PC-9 (cell line): ENCODE measurements at regions of chr7 and their contacts with region 1.

Region 1: GRCh38 chr7:24812310-24812945 is 55.2 kb upstream of the GSDME start:
- DNase-seq: peak in 1 of 2 experiments; percentile 61
- H3K4me3 ChIP-seq: no peak overlapping the region
- H3K27ac ChIP-seq: no peak overlapping the region
- H3K4me1 ChIP-seq: no peaks in the 10 kb centered on the region
- H3K27me3 ChIP-seq: no peaks in the 10 kb centered on the region
- CTCF ChIP-seq: peak; percentile 99

Region 2: DNA sequence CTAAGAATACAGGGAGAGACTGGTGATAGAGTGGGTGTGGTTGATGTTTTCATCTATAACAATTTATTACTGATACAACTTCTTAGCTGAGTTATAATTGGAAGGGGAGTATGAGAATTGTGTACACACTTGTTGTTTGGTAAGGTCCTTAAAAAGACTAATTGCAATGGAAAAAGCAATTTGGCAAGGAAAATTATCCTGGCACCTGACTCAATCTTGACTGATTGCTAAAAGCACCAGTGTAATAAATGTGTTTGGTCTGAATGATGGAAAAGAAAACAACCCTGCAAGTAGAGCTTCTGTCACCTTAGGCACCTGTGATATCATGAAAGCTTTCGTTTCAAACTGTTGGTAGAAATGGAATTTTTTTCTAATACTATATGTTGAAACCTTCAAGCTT is 48.4 kb before region 1 on chr7:
- CTCF ChIA-PET with region 1: interaction called, 11 read pairs
- POLR2A ChIA-PET with region 1: no interaction called
- intact Hi-C with region 1: no loop called
- DNase-seq: no peak
- H3K4me3 ChIP-seq: no peak overlapping the region
- H3K27ac ChIP-seq: no peak overlapping the region
- H3K4me1 ChIP-seq: no peaks in the 10 kb centered on the region
- H3K27me3 ChIP-seq: no peaks in the 10 kb centered on the region
- CTCF ChIP-seq: no peak

Region 3: GRCh38 chr7:24825931-24826661 is 13.7 kb after region 1 on chr7:
- CTCF ChIA-PET with region 1: interaction called, 16 read pairs
- POLR2A ChIA-PET with region 1: no interaction called
- intact Hi-C with region 1: no loop called
- DNase-seq: peak; percentile 82 to 98
- H3K4me3 ChIP-seq: peak overlapping the region; percentile 10; the same call in 1 of the 2 replicates
- H3K27ac ChIP-seq: peak overlapping the region; percentile 90
- H3K4me1 ChIP-seq: peaks cover 57% of the 10 kb centered on the region
- H3K27me3 ChIP-seq: no peaks in the 10 kb centered on the region
- CTCF ChIP-seq: no peak

Region 4: DNA sequence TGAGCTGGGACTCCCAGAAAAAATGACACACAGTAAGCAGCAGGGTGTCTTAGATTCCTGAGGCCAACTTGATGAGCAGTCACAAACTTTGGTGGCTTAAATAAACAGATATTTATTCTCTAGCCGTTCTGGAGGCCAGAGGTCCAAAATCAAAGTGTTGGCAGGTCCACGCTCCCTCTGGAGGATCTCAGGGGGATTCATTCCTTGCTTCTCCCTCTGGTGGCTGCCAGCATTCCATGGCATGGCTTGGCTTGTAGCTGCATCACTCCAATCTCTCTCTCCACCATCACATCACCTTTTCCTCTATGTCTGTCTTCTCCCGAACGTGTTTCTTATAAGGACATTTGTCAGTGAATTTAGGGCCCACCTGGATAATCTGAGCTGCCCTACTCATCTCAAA is 69.2 kb after region 1 on chr7:
- CTCF ChIA-PET with region 1: interaction called, 13 read pairs
- POLR2A ChIA-PET with region 1: no interaction called
- intact Hi-C with region 1: no loop called
- DNase-seq: no peak
- H3K4me3 ChIP-seq: no peak overlapping the region
- H3K27ac ChIP-seq: no peak overlapping the region
- H3K4me1 ChIP-seq: 0 out of 2 replicates have a peak, but pooled peaks cover 10% of the 10 kb centered on the region
- H3K27me3 ChIP-seq: no peaks in the 10 kb centered on the region
- CTCF ChIP-seq: no peak

Region 5: DNA sequence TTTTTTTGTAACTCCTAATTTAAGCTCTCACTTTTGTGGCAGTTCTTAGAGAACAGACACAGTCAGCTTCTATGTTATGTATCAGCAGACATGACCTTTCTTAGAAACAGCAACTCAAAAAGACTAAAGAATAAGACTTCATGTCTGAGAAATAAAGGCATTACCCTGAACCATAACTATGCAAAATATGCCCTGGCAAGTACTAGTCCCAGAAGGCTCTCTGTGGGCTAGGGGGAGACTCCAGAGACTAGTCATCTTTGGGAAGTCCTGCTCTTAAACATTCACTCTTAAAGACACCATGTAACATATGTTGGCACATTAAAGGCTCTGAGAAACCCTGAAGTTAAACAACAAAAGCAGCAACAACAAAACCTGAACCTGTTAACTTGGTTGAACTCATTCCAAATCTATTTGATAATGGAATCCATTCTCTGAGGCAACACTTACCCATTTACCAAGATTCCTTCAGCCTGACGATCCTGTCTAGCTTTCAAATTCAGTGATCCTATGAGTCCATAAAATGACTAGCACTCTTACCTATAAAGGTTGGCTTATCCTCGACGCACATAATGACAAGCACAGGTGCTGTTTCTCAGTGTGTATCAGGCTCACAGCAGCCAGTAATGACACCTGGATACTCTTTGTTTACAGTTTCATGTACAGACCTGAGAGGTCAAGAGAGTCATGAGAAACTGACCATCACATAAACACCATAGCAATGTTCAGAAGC is 105.2 kb after region 1 on chr7:
- CTCF ChIA-PET with region 1: no interaction called
- POLR2A ChIA-PET with region 1: no interaction called
- intact Hi-C with region 1: no loop called
- DNase-seq: no peak
- H3K4me3 ChIP-seq: no peak overlapping the region
- H3K27ac ChIP-seq: no peak overlapping the region
- H3K4me1 ChIP-seq: peaks cover 34% of the 10 kb centered on the region
- H3K27me3 ChIP-seq: no peaks in the 10 kb centered on the region
- CTCF ChIP-seq: no peak

Region 6: GRCh38 chr7:25060487-25061055 is 248.1 kb after region 1 on chr7:
- CTCF ChIA-PET with region 1: interaction called, 14 read pairs
- POLR2A ChIA-PET with region 1: no interaction called
- intact Hi-C with region 1: no loop called
- DNase-seq: no peak
- H3K4me3 ChIP-seq: no peak overlapping the region
- H3K27ac ChIP-seq: no peak overlapping the region
- H3K4me1 ChIP-seq: no peaks in the 10 kb centered on the region
- H3K27me3 ChIP-seq: no peaks in the 10 kb centered on the region
- CTCF ChIP-seq: no peak

Region 7: GRCh38 chr7:25069900-25070443 is 257.5 kb after region 1 on chr7:
- CTCF ChIA-PET with region 1: interaction called, 8 read pairs
- POLR2A ChIA-PET with region 1: no interaction called
- intact Hi-C with region 1: loop called (anchors 1 kb)
- DNase-seq: peak; percentile 67 to 76
- H3K4me3 ChIP-seq: no peak overlapping the region
- H3K27ac ChIP-seq: no peak overlapping the region
- H3K4me1 ChIP-seq: peaks cover 5% of the 10 kb centered on the region
- H3K27me3 ChIP-seq: no peaks in the 10 kb centered on the region
- CTCF ChIP-seq: peak; percentile 96